ENCODE measurements at regions of chr5 and their contacts with region 1.

Region 1: GRCh38 chr5:154653764-154654485 is 101.3 kb upstream of the LARP1 start:
- DNase-seq: no peak
- H3K4me3 ChIP-seq: no peak overlapping the region
- H3K27ac ChIP-seq: peak overlapping the region; percentile 49
- H3K4me1 ChIP-seq: peaks cover 18% of the 10 kb centered on the region
- H3K27me3 ChIP-seq: no peaks in the 10 kb centered on the region
- CTCF ChIP-seq: no peak

Region 2: GRCh38 chr5:154857530-154858296 is 203.8 kb after region 1 on chr5:
- CTCF ChIA-PET with region 1: no interaction called
- POLR2A ChIA-PET with region 1: no interaction called
- intact Hi-C with region 1: loop called (anchors 5 kb)
- DNase-seq: peak; percentile 96
- H3K4me3 ChIP-seq: peak overlapping the region; percentile 60
- H3K27ac ChIP-seq: peak overlapping the region; percentile 99
- H3K4me1 ChIP-seq: peaks cover 29% of the 10 kb centered on the region
- H3K27me3 ChIP-seq: no peaks in the 10 kb centered on the region
- CTCF ChIP-seq: no peak

Region 3: GRCh38 chr5:154923441-154924430 is 269.8 kb after region 1 on chr5:
- CTCF ChIA-PET with region 1: interaction called, 3 read pairs
- POLR2A ChIA-PET with region 1: no interaction called
- intact Hi-C with region 1: loop called (anchors 10 kb)
- DNase-seq: no peak
- H3K4me3 ChIP-seq: no peak overlapping the region
- H3K27ac ChIP-seq: no peak overlapping the region
- H3K4me1 ChIP-seq: no peaks in the 10 kb centered on the region
- H3K27me3 ChIP-seq: no peaks in the 10 kb centered on the region
- CTCF ChIP-seq: no peak

Region 4: DNA sequence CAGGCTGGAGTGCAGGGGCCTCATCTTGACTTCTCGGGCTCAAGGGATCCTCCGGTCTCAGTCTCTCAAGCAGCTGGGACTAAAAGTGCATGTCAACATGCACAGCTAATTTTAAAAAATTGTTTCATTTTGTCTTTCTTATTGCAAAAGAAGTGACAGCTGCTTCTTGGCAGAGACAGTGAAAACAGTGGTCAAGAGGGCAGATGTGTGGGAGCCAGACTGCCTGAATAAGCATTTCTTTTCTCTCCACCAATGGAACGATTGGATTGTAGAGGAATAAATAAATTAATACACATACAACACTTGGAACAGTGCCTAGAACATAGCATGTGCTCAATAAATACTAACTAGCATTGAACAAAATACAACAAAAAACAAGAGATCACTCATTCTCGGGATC is 332.2 kb after region 1 on chr5:
- CTCF ChIA-PET with region 1: no interaction called
- POLR2A ChIA-PET with region 1: no interaction called
- intact Hi-C with region 1: no loop called
- DNase-seq: no peak
- H3K4me3 ChIP-seq: no peak overlapping the region
- H3K27ac ChIP-seq: no peak overlapping the region
- H3K4me1 ChIP-seq: peaks cover 15% of the 10 kb centered on the region
- H3K27me3 ChIP-seq: no peaks in the 10 kb centered on the region
- CTCF ChIP-seq: no peak

Measured in A673 (cell line).